Activated CD4-positive, alpha-beta T cell treated with anti-CD3 and anti-CD28 coated beads, Interleukin-2, amount 10 ng/mL, durations not matched to agents 24 days and 14 days (primary cell): ENCODE measurements at regions of chr15 and their contacts with region 1.

Region 1: GRCh38 chr15:89177633-89178306 is 43.6 kb downstream of the RLBP1 start:
- DNase-seq: peak; percentile 89
- H3K4me3 Mint-ChIP-seq: no peak overlapping the region
- H3K27ac Mint-ChIP-seq: peak overlapping the region; percentile 93
- H3K4me1 Mint-ChIP-seq: peaks cover 33% of the 10 kb centered on the region
- H3K27me3 Mint-ChIP-seq: no peaks in the 10 kb centered on the region

Region 2: GRCh38 chr15:88904624-88905327 is 273.0 kb before region 1 on chr15:
- intact Hi-C with region 1: loop called (anchors 5 kb)
- DNase-seq: peak; percentile 98
- H3K4me3 Mint-ChIP-seq: peak overlapping the region; percentile 22
- H3K27ac Mint-ChIP-seq: peak overlapping the region; percentile 64
- H3K4me1 Mint-ChIP-seq: peaks cover 20% of the 10 kb centered on the region
- H3K27me3 Mint-ChIP-seq: no peaks in the 10 kb centered on the region

Region 3: GRCh38 chr15:89057504-89058133 is 120.2 kb before region 1 on chr15:
- intact Hi-C with region 1: loop called (anchors 1 kb)
- DNase-seq: peak; percentile 95
- H3K4me3 Mint-ChIP-seq: no peak overlapping the region
- H3K27ac Mint-ChIP-seq: no peak overlapping the region
- H3K4me1 Mint-ChIP-seq: peaks cover 8% of the 10 kb centered on the region
- H3K27me3 Mint-ChIP-seq: peaks cover 2% of the 10 kb centered on the region

Region 4: DNA sequence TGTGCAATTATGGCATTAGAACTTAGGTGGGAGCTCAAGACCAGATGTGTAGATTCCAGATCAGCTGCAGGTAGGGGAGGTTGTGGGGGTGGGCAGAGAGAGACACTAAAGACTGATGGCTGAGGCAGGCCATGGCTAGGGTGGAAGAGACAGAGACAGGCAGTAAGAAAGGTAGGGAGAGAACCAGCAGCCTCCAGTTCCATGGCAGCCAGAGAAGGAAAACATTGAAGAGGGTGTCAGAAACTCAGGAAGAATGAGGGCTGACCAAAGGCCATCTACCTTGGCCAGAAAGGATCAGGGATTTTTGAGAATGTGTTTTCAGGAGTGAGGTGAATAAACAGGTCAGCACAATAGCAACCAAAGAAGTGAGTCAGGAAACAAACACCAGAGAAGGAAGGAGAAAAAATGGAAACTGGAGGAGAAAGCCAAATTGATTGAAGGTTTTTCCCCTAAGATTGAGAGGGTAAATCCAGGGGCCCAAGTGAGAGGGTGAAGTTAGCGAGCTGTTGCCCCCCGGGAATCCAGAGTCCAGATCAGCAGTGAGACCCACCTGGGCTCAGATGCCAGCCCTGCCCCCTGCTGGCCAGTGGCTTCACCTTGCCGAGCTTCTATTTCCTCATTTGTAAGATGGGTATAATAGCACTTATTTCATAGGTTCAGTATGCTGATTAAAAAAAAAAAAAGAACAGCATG is 48.5 kb before region 1 on chr15:
- intact Hi-C with region 1: loop called (anchors 5 kb)
- DNase-seq: peak; percentile 83
- H3K4me3 Mint-ChIP-seq: no peak overlapping the region
- H3K27ac Mint-ChIP-seq: no peak overlapping the region
- H3K4me1 Mint-ChIP-seq: peaks cover 21% of the 10 kb centered on the region
- H3K27me3 Mint-ChIP-seq: no peaks in the 10 kb centered on the region

Region 5: GRCh38 chr15:89167267-89168176 is 10.2 kb before region 1 on chr15:
- intact Hi-C with region 1: loop called (anchors 1 kb)
- DNase-seq: peak; percentile 66
- H3K4me3 Mint-ChIP-seq: peak overlapping the region; percentile 69
- H3K27ac Mint-ChIP-seq: peak overlapping the region; percentile 86
- H3K4me1 Mint-ChIP-seq: peaks cover 17% of the 10 kb centered on the region
- H3K27me3 Mint-ChIP-seq: no peaks in the 10 kb centered on the region

Region 6: GRCh38 chr15:89211730-89212129 is 34.0 kb after region 1 on chr15:
- intact Hi-C with region 1: no loop called
- DNase-seq: no peak
- H3K4me3 Mint-ChIP-seq: no peak overlapping the region
- H3K27ac Mint-ChIP-seq: no peak overlapping the region
- H3K4me1 Mint-ChIP-seq: peaks cover 10% of the 10 kb centered on the region
- H3K27me3 Mint-ChIP-seq: peaks cover 5% of the 10 kb centered on the region